PC-9 (cell line): ENCODE measurements at regions of chr22 and their contacts with region 1.

Region 1: GRCh38 chr22:31290494-31291471 is 1.5 kb downstream of the PIK3IP1 start:
- DNase-seq: peak; percentile 90 to 93
- H3K4me3 ChIP-seq: peak overlapping the region; percentile 85
- H3K27ac ChIP-seq: peak overlapping the region; percentile 80
- H3K4me1 ChIP-seq: peaks cover 45% of the 10 kb centered on the region
- H3K27me3 ChIP-seq: no peaks in the 10 kb centered on the region
- CTCF ChIP-seq: no peak

Region 2: GRCh38 chr22:31160328-31160978 is 130.3 kb before region 1 on chr22:
- CTCF ChIA-PET with region 1: no interaction called
- POLR2A ChIA-PET with region 1: no interaction called
- intact Hi-C with region 1: loop called (anchors 1 kb)
- DNase-seq: no peak
- H3K4me3 ChIP-seq: peak overlapping the region; percentile 90
- H3K27ac ChIP-seq: no peak overlapping the region
- H3K4me1 ChIP-seq: peaks cover 19% of the 10 kb centered on the region
- H3K27me3 ChIP-seq: no peaks in the 10 kb centered on the region
- CTCF ChIP-seq: no peak

Region 3: DNA sequence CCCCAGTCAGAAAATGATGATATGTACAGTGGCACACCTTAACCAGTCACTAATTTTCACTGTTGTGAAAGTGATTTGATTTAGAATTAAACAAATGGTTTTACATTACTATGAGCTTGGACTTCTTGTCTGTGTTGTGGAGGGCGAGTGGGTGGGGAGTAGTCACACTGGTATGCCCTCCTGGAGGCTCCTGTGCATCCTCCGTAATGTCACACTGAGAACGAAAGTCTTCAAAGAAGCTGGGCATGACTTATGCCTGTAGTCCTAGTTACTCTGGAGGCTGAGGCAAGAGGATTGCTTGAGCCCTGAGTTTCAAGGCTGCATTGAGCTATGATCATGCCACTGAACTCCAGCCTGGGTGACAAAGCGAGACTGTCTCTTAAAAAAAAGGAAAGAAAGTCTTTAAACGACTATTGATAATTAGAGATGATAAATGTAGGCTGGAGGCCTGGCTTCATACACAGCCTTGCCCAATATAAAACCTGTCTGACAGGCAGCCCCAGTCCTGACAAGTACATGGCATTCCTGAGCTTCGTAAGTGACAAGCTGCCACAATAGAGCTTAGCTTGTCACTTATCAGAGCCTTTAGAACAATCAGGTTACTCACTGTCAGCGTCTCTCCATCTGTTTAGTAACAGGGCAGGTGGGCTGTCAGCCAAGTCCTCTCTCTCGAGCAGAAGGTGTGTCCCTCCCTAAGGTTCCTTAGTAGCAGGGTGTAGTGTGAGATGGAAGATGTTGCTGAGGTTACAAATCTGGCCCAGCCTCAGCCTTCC is 83.7 kb before region 1 on chr22:
- CTCF ChIA-PET with region 1: interaction called, 3 read pairs
- POLR2A ChIA-PET with region 1: interaction called, 4 read pairs
- intact Hi-C with region 1: loop called (anchors 1 kb)
- DNase-seq: peak; percentile 87 to 99
- H3K4me3 ChIP-seq: no peak overlapping the region
- H3K27ac ChIP-seq: peak overlapping the region; percentile 31; the same call in 1 of the 2 replicates
- H3K4me1 ChIP-seq: peaks cover 23% of the 10 kb centered on the region
- H3K27me3 ChIP-seq: no peaks in the 10 kb centered on the region
- CTCF ChIP-seq: no peak

Region 4: GRCh38 chr22:31253949-31254348 is 36.8 kb before region 1 on chr22:
- CTCF ChIA-PET with region 1: interaction called, 4 read pairs
- POLR2A ChIA-PET with region 1: no interaction called
- intact Hi-C with region 1: loop called (anchors 2 kb)
- DNase-seq: peak; percentile 81 to 95
- H3K4me3 ChIP-seq: no peak overlapping the region
- H3K27ac ChIP-seq: no peak overlapping the region
- H3K4me1 ChIP-seq: peaks cover 6% of the 10 kb centered on the region; the same call in 1 of the 2 replicates
- H3K27me3 ChIP-seq: no peaks in the 10 kb centered on the region
- CTCF ChIP-seq: no peak

Region 5: DNA sequence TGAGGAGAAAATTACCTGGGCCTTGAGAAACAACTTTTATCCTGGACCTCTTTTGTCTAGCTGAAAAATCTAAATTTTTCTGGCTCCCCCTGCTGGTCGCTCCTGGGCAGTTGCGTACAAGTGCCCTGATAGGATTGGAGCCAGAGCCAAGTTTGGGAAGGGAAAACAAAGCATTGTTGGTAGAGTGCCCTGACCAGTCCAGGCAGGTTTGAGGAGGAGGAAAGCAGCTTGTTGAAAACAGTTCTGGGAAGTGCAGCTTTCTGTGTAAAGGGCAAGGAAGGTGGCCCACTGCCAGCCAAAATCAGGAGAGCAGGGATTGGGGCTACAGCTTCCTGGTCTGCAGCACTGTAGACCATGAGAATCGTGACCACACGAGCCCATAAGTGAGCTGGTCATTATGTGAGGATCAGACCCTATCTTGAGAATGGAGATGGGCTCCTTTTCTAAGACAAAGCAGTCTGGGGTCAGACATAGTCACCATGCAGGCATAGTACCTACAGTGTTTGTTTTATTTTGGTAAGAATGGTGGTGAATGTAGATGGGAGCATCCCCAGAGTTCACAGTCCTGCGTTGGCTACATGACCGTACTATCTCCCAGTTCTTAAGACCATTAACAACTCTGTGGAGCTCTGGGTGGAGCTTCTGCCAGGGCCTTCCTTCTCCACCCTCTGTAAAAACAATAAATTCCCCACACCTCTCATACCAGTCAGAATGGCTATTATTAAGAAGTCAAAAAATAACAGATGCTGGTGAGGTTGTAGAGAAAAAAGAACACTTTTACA is 22.8 kb after region 1 on chr22:
- CTCF ChIA-PET with region 1: interaction called, 10 read pairs
- POLR2A ChIA-PET with region 1: interaction called, 6 read pairs
- intact Hi-C with region 1: loop called (anchors 1 kb)
- DNase-seq: peak; percentile 84 to 88
- H3K4me3 ChIP-seq: no peak overlapping the region
- H3K27ac ChIP-seq: peak overlapping the region; percentile 61
- H3K4me1 ChIP-seq: peaks cover 10% of the 10 kb centered on the region
- H3K27me3 ChIP-seq: no peaks in the 10 kb centered on the region
- CTCF ChIP-seq: peak; percentile 96

Region 6: DNA sequence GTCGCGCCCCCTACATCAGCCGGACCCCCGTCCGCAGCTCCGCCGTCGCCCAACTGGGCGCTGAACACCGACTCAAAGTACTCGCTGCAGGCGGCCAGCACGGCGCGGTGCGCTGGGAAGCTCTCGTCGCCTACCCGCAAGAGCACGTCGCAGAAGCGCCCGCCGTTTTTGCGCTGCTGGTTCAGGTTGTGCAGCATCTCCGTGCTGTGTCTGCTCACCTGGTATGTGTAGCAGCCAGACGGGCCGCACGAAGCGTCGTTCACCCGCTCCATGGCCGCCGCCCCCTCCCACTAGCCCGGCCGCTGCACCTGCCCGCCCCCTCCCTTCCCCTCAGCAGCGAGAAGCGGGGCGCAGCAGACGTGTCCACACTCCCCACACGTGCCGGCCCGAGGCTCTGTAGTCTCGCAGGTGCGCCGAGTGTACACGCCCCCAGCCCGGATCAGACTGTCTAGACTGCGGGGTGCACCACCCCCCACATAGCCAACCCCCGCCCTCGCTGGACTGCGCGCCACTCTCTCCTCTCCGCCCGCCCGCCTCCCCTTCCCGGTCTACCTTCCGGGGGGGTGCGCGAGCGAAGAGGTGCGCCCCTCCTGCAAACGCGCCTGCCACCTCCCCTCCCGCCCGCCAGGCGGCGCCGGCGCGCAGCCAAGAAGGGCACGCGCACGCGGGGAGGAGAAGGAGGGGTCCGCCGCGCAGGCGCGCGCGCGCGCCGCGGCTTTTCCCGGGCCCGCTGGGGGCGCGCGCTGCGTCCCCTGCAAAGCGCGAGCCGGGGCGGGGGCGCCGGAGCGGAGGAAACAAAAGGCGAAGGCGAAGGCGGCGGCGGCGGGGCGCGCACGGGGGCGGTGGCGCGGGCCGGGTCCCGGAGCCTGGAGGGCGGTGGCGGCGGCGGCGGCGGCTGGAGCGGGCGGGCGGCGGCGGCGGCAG is 54.8 kb after region 1 on chr22:
- CTCF ChIA-PET with region 1: no interaction called
- POLR2A ChIA-PET with region 1: interaction called, 9 read pairs
- intact Hi-C with region 1: loop called (anchors 1 kb)
- DNase-seq: peak; percentile 71 to 85
- H3K4me3 ChIP-seq: peak overlapping the region; percentile 70
- H3K27ac ChIP-seq: no peak overlapping the region; the same call in 1 of the 2 replicates
- H3K4me1 ChIP-seq: peaks cover 57% of the 10 kb centered on the region
- H3K27me3 ChIP-seq: no peaks in the 10 kb centered on the region
- CTCF ChIP-seq: peak; percentile 93

Region 7: GRCh38 chr22:31399211-31400028 is 108.6 kb after region 1 on chr22 and contains the start of gene DRG1:
- CTCF ChIA-PET with region 1: no interaction called
- POLR2A ChIA-PET with region 1: interaction called, 3 read pairs
- intact Hi-C with region 1: loop called (anchors 5 kb)
- DNase-seq: peak; percentile 89 to 95
- H3K4me3 ChIP-seq: peak within 1 kb of the TSS; percentile 90
- H3K27ac ChIP-seq: peak within 1 kb of the TSS; percentile 34
- H3K4me1 ChIP-seq: peaks cover 14% of the 10 kb centered on the region
- H3K27me3 ChIP-seq: no peaks in the 10 kb centered on the region
- CTCF ChIP-seq: no peak
- total RNA-seq, gene DRG1: 60.1 and 73.8 TPM in 2 replicates

Region 8: GRCh38 chr22:31425331-31426050 is 134.7 kb after region 1 on chr22:
- CTCF ChIA-PET with region 1: no interaction called
- POLR2A ChIA-PET with region 1: no interaction called
- intact Hi-C with region 1: no loop called
- DNase-seq: no peak
- H3K4me3 ChIP-seq: no peak overlapping the region
- H3K27ac ChIP-seq: no peak overlapping the region
- H3K4me1 ChIP-seq: no peaks in the 10 kb centered on the region
- H3K27me3 ChIP-seq: no peaks in the 10 kb centered on the region
- CTCF ChIP-seq: no peak